ENCODE measurements at regions of chr20 and their contacts with region 1.

Region 1: DNA sequence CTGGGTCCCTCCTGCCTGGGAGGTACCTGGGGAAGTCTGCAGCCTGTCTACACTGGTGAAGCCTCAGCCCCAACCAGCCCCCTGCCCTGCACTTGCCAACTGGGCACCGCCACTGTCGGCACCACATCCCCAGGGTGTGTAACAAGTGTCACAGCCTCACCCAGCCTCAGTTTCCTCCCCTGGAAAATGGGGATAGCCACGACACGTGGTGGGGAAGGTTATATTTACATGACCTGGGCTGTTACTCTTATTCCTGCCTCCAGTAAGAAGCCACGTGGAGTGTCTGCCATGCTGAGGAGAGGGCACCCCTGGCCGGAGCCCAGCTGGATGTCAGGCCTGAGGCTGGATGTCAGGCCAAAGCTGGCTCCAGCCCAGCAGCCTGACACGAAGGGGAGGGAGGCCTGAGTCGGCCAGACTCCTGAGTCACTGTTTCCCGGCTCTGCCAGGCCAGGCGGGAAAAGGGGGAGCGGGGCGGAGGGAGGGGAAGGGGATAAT is 44.9 kb downstream of the SNAI1 start:
- DNase-seq: peak; percentile 74 to 94
- H3K4me3 ChIP-seq: no peak overlapping the region
- H3K27ac ChIP-seq: peak overlapping the region; percentile 82 to 89
- H3K4me1 ChIP-seq: peaks cover 14 to 36% of the 10 kb centered on the region in 2 donors
- H3K27me3 ChIP-seq: no peaks in the 10 kb centered on the region
- CTCF ChIP-seq: no peak

Region 2: DNA sequence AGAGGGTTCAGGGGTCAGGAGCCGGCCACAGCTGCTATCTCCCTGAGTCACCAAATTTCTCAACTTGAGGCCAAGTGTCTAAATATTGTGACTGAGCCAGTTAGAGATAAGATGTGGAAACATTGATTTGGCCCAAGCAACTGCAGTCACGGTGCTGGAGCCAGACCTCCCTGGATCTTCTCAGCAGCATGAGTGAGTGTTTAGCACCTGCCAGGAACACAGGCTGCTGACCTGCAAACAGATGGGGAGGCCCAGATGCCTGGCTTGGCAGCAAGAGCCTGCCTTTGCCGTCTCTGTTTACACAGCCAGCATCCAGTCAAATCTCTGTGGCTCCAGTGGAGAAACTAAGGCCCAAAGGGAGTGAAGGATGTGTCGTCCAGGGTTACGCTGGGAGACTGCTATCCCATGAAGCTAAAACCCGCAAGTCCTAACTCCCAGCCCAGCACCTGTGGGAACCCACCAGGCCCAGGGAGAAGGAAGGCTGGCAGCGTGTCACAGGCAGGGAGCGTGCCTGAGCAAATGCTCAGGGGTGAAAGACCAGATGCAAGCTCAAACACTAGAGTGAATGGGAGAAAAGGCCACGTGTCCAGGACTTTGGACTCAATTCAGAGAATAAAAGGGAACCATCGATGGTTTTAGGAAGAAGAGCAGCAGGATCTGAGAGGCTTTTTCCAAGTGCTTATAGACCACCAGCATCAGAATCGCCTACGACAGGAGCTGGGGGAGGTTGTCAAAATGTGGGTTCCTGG is 443.8 kb before region 1 on chr20:
- intact Hi-C with region 1: loop called (anchors 10 kb)
- DNase-seq: peak; percentile 78 to 92
- H3K4me3 ChIP-seq: no peak overlapping the region
- H3K27ac ChIP-seq: peak overlapping the region; percentile 97 to 100
- H3K4me1 ChIP-seq: peaks cover 31 to 83% of the 10 kb centered on the region in 2 donors
- H3K27me3 ChIP-seq: no peaks in the 10 kb centered on the region
- CTCF ChIP-seq: peak in 1 of 3 experiments; percentile 13

Region 3: GRCh38 chr20:49865559-49865958 is 162.1 kb before region 1 on chr20:
- intact Hi-C with region 1: loop called (anchors 10 kb)
- DNase-seq: peak in 1 of 2 donors; percentile 66
- H3K4me3 ChIP-seq: no peak overlapping the region
- H3K27ac ChIP-seq: peak overlapping the region; percentile 51 to 76
- H3K4me1 ChIP-seq: peaks cover 12 to 35% of the 10 kb centered on the region in 2 donors
- H3K27me3 ChIP-seq: no peaks in the 10 kb centered on the region
- CTCF ChIP-seq: no peak

Region 4: GRCh38 chr20:49982346-49983122 is 45.1 kb before region 1 on chr20 and contains the start of gene SNAI1:
- intact Hi-C with region 1: loop called (anchors 2 kb)
- DNase-seq: peak in 1 of 2 donors; percentile 84
- H3K4me3 ChIP-seq: peak within 1 kb of the TSS; percentile 66 to 80
- H3K27ac ChIP-seq: peak within 1 kb of the TSS; percentile 69 to 71
- H3K4me1 ChIP-seq: peaks cover 12 to 37% of the 10 kb centered on the region in 2 donors
- H3K27me3 ChIP-seq: no peaks in the 10 kb centered on the region
- CTCF ChIP-seq: peak; percentile 35 to 84 (median 62)
- total RNA-seq, gene SNAI1: 64.4 TPM

Region 5: GRCh38 chr20:50048420-50049166 is 20.9 kb after region 1 on chr20:
- intact Hi-C with region 1: loop called (anchors 2 kb)
- DNase-seq: peak; percentile 27 to 79
- H3K4me3 ChIP-seq: peak overlapping the region in 1 of 2 donors; percentile 16
- H3K27ac ChIP-seq: peak overlapping the region; percentile 44 to 79
- H3K4me1 ChIP-seq: peaks cover 6 to 8% of the 10 kb centered on the region in 2 donors
- H3K27me3 ChIP-seq: no peaks in the 10 kb centered on the region
- CTCF ChIP-seq: no peak